ENCODE measurements at regions of chr10 and their contacts with region 1.

Region 1: DNA sequence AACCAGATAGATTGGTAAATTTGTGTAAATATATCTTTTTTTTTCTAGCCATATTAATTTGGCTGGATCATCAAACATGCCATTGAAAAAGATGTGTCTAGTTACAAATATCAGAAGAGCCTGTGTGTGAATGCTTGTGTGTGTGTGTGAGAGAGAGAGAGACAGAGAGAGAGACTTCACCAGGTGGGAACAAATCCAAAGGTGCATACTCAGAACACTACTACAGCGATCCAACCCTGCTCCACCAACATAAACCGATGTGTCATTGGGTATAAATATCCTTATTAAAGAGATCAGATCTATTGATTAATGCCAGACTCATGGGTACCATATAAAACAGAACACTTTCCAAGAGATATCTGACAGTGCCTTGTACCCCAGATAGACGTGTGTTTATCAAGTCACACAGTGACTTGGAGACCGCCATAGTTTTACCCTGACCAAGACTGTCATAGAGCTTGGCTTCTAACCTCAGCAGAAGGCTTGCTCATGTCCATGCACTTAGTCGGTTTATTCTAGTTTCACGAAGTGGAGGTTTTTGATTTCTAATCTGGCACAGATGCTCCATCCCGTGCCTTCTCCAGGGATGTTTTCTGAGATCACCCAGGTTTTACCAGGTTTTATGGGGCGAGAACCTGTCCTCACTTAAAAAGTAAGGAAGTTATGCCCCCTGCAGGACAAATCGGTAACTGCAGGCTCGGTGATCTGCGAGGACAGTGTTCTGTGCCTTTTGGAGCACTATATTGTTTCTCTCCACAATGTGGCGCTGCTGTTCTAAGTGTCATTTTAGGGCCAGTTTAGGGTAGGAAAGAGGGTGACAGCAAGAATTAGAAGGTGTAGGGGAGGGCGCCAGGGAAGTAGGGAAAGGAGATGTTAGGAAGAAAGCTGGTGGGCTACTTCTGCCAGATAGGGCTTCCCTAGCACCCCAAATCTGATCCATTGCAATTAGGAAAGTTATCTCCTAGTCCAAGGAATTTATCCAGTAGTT is 29.3 kb upstream of the WNT8B start:
- DNase-seq: peak; percentile 95
- H3K4me3 ChIP-seq: no peak overlapping the region
- H3K27ac ChIP-seq: no peak overlapping the region
- H3K4me1 ChIP-seq: no peaks in the 10 kb centered on the region
- CTCF ChIP-seq: peak; percentile 100

Region 2: DNA sequence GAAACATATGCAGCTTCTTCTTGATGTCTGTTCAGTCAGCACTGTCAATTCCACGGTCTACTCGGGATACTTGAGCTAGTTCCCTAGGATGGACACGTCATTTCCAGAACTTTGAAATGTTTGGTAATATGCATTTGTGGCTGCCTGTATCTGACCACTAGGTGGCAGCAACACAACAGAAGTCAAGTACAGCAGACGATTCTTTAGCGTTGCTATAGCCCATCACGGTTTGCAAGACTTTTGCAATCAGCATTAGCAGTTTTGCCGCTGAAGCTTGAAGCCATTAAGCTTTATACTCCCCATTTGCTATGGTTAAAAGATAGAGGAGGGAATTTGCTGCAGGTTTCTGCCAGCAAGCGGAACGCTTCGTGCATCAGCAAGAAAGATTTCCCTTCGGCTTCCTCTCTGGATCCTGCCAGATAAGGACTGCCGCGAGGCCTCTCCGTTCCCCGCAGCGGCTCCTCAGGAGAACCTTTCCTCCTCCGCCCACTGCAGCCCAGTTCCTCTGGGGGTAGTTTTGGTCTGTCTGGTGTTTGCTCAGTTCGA is 587.6 kb before region 1 on chr10:
- CTCF ChIA-PET with region 1: no interaction called
- POLR2A ChIA-PET with region 1: no interaction called
- intact Hi-C with region 1: loop called (anchors 5 kb)
- DNase-seq: peak; percentile 90
- H3K4me3 ChIP-seq: no peak overlapping the region
- H3K27ac ChIP-seq: no peak overlapping the region
- H3K4me1 ChIP-seq: peaks cover 5% of the 10 kb centered on the region
- CTCF ChIP-seq: peak; percentile 98

Region 3: GRCh38 chr10:100303724-100304319 is 129.7 kb before region 1 on chr10:
- CTCF ChIA-PET with region 1: interaction called, 3 read pairs
- POLR2A ChIA-PET with region 1: no interaction called
- intact Hi-C with region 1: loop called (anchors 1 kb)
- DNase-seq: peak; percentile 50
- H3K4me3 ChIP-seq: no peak overlapping the region
- H3K27ac ChIP-seq: no peak overlapping the region
- H3K4me1 ChIP-seq: no peaks in the 10 kb centered on the region
- CTCF ChIP-seq: peak; percentile 87

Region 4: DNA sequence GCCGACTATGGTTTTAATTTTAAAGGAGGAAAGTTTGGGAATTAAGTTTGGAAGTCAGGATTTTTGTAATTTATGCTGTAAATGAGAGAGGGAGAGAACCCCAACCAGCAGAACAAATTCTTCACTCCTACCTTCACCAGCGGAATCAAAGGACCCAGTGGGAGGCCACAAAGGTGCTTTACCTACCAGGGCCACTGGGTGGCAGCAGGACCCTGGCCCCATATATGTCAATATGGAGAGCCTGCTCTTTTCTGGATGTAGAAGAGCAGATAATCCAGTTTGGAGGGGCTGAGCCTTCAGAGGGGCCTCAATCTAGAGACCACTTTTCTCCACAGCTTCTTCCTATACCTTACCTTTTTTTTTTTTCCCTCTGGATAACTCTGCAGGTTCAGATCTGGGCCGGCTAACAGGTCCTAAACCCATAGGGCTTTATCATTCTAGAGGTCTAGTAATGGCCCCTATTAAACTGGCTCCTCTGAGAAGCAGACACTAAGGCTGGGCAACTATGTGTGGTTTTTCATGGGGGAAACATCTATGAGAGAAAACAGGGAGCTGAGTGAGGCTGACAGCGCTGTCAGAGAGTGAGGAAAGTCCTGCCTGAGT is 95.0 kb before region 1 on chr10:
- CTCF ChIA-PET with region 1: interaction called, 4 read pairs
- POLR2A ChIA-PET with region 1: interaction called, 4 read pairs
- intact Hi-C with region 1: loop called (anchors 1 kb)
- DNase-seq: peak; percentile 81
- H3K4me3 ChIP-seq: peak overlapping the region; percentile 24
- H3K27ac ChIP-seq: peak overlapping the region; percentile 59
- H3K4me1 ChIP-seq: peaks cover 23% of the 10 kb centered on the region
- CTCF ChIP-seq: peak; percentile 95

Region 5: DNA sequence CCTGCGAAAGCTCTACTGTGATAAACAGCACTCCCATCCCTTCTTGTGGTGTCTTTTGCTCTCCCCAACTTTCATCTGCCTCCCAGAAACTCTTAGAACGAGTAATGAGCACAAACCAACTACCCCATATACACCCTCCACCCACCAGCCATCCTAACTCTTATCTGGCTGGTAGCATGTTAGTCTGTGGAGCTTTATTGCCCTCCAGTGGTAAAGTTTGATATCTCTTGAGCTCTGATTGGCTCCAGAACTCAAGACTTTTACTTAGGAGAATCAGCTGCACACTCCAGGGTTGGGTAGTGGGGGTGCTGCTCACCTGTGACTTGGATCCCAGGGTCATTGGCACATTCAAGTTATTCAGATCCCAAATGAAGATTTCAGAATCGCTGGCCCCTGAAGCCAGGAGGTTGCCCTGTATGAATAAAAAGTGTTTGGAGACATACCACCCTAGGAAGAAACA is 75.2 kb after region 1 on chr10:
- CTCF ChIA-PET with region 1: no interaction called
- POLR2A ChIA-PET with region 1: no interaction called
- intact Hi-C with region 1: loop called (anchors 1 kb)
- DNase-seq: peak; percentile 70
- H3K4me3 ChIP-seq: no peak overlapping the region
- H3K27ac ChIP-seq: no peak overlapping the region
- H3K4me1 ChIP-seq: peaks cover 18% of the 10 kb centered on the region
- CTCF ChIP-seq: peak; percentile 83

Region 6: DNA sequence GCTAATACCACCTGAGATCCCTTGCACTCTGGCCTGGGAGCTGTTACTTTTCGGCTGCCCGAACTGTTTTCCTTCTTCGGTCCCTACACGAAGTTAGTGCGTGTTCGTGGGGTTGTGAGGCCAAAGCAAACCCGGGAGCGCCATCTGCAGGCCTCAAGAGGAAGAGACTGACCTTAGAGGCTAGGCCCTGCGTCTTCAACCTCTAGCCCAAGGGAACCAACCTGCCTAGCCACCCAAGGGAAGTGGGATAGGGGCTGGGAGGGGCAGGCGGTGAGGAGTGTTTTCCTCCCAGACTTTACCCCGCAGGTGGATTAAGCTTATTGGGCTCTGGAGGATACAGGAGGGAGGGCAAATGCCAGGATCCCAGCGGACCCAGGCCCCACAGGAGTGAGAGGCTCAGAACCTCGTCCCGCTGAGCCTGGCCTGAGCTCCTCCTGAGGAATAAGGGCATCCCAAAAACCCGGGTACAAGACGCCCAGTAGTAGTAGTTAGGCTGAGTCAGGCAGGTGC is 310.1 kb after region 1 on chr10:
- CTCF ChIA-PET with region 1: no interaction called
- POLR2A ChIA-PET with region 1: no interaction called
- intact Hi-C with region 1: loop called (anchors 5 kb)
- DNase-seq: peak; percentile 70
- H3K4me3 ChIP-seq: no peak overlapping the region
- H3K27ac ChIP-seq: no peak overlapping the region
- H3K4me1 ChIP-seq: no peaks in the 10 kb centered on the region
- CTCF ChIP-seq: peak; percentile 85

Region 7: DNA sequence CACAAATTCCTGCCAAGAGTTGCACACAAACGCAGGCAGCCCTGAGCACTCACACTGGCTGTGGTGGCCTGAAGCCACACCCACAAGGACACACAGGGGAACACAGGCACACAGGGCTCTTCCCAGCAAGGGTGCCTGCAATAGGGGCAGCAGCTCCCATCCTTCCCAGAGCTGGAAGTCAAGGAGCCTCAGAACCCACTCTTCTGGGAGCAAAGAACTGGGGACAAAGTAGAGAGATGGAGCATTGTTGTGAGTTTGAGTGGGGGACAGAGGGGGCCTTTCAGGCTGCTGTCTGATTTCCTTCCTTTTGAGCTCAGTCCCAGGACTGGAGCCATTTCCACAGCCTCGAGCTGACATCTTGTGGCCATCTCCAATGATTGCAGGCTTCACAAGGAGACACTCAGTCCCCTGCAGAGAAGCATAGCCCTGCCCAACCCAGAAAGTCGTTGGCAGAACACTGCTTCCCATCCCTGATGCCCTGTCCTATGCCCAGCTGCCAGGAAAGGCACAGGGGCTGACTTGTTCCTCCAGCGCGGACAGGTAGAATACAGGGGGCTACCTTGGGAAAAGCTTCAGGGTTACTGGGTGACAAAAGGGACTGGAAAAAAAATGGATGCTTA is 444.9 kb after region 1 on chr10:
- CTCF ChIA-PET with region 1: no interaction called
- POLR2A ChIA-PET with region 1: no interaction called
- intact Hi-C with region 1: loop called (anchors 2 kb)
- DNase-seq: peak; percentile 86
- H3K4me3 ChIP-seq: no peak overlapping the region
- H3K27ac ChIP-seq: no peak overlapping the region
- H3K4me1 ChIP-seq: peaks cover 35% of the 10 kb centered on the region
- CTCF ChIP-seq: peak; percentile 89